ENCODE measurements at regions of chr11 and their contacts with region 1.

Region 1: GRCh38 chr11:3841426-3842350 is 929 bp upstream of the RHOG start:
- DNase-seq: peak; percentile 86 to 91
- ATAC-seq: peak; percentile 79 to 89 (median 82)
- H3K4me3 ChIP-seq: peak overlapping the region; percentile 92
- H3K27ac ChIP-seq: peak overlapping the region; percentile 96
- H3K4me1 ChIP-seq: peaks cover 19% of the 10 kb centered on the region
- H3K27me3 ChIP-seq: no peaks in the 10 kb centered on the region
- CTCF ChIP-seq: peak; percentile 88

Region 2: GRCh38 chr11:3797329-3798095 is 44.2 kb before region 1 on chr11 and contains the start of gene NUP98:
- intact Hi-C with region 1: loop called in 1 of 2 experiments (anchors 2 kb)
- DNase-seq: peak; percentile 100
- ATAC-seq: peak; percentile 93 to 95 (median 94)
- H3K4me3 ChIP-seq: peak within 1 kb of the TSS; percentile 90
- H3K27ac ChIP-seq: peak within 1 kb of the TSS; percentile 95
- H3K4me1 ChIP-seq: peaks cover 3% of the 10 kb centered on the region
- H3K27me3 ChIP-seq: no peaks in the 10 kb centered on the region
- CTCF ChIP-seq: no peak
- total RNA-seq, gene NUP98: 45.3 to 85.1 (median 72.3) TPM

Region 3: DNA sequence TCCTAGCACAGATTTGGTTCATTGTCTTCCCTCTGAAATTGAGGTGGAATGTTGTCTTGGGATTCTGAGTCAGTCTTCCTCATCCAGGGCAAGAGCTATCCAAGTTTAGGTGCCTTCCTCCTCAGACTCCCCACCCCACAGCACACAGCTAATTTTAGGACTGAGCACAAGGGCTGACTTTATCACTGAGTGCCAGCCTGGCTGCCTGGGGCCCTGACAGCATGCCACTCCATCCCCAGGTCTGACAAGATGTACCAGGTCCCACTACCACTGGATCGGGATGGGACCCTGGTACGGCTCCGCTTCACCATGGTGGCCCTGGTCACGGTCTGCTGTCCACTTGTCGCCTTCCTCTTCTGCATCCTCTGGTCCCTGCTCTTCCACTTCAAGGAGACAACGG is 30.7 kb before region 1 on chr11:
- intact Hi-C with region 1: loop called in 1 of 2 experiments (anchors 2 kb)
- DNase-seq: no peak
- ATAC-seq: peak; percentile 60 to 77 (median 73)
- H3K4me3 ChIP-seq: no peak overlapping the region
- H3K27ac ChIP-seq: peak overlapping the region; percentile 36
- H3K4me1 ChIP-seq: peaks cover 13% of the 10 kb centered on the region
- H3K27me3 ChIP-seq: no peaks in the 10 kb centered on the region
- CTCF ChIP-seq: no peak

Region 4: GRCh38 chr11:3905080-3905953 is 63.6 kb after region 1 on chr11:
- intact Hi-C with region 1: no loop called
- DNase-seq: no peak
- ATAC-seq: peak; percentile 43 to 76 (median 73)
- H3K4me3 ChIP-seq: no peak overlapping the region
- H3K27ac ChIP-seq: peak overlapping the region; percentile 85
- H3K4me1 ChIP-seq: peaks cover 79% of the 10 kb centered on the region
- H3K27me3 ChIP-seq: no peaks in the 10 kb centered on the region
- CTCF ChIP-seq: no peak

Region 5: DNA sequence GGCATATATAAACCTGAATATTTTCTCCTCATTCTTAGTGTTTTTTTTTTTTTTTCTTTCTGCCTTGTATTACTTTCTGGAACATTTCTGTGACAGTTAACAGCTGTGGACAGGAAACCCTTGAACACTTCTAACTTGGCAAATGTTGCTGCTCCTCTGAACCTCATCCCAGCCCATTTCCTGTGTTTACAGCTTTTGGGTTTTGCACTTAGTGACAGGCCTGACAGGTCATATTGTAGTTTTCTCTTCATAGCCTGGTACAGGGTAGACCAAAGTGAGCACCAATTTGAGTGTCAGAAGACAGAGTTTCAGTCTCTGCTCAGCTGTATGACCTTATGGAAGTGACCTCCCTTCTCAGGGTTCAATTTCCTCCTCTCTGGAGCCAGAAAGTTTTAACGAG is 105.4 kb after region 1 on chr11:
- intact Hi-C with region 1: no loop called
- DNase-seq: no peak
- ATAC-seq: peak in 3 of 4 donors; percentile 38 to 62 (median 42)
- H3K4me3 ChIP-seq: no peak overlapping the region
- H3K27ac ChIP-seq: peak overlapping the region; percentile 79
- H3K4me1 ChIP-seq: peaks cover 87% of the 10 kb centered on the region
- H3K27me3 ChIP-seq: no peaks in the 10 kb centered on the region
- CTCF ChIP-seq: no peak